ENCODE measurements at regions of chr5 and their contacts with region 1.

Region 1: DNA sequence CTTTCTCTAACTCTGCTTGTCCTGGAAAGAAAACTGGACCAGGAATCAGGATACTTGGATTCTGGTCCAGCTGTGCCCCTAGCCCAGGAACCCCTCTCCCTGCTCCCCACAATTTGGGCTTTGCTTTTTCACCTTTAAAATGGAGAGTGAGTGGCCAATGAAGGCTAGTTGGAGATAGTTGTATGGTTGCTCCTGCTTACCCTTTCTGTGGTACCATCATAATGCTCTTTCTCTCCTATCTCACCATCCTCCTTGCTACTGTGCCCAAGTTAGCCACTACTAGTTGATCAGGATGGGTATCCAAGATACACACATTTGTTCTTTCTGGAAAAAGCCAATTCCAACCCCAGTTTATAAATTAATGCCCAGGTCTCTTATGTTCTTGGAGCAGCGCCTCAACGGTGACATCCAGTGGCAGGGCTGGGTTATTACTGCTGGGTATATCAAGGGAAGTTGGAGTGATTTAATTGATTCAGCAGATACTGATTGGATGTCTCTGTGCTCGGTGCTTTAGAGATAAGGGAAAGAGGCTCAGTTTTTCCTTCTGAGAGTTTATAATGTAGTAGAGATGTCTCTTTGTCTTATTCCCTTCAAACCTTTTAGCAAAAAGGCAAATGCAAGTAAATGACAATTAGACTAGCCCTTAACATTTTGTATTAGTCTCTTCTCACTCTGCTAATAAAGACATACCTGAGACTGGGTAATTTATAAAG is 38.6 kb downstream of the FAXDC2 start:
- DNase-seq: peak; percentile 43
- H3K4me3 Mint-ChIP-seq: no peak overlapping the region
- H3K27ac Mint-ChIP-seq: no peak overlapping the region
- H3K4me1 Mint-ChIP-seq: peaks cover 11% of the 10 kb centered on the region
- H3K27me3 Mint-ChIP-seq: no peaks in the 10 kb centered on the region

Region 2: GRCh38 chr5:154647114-154647760 is 164.6 kb before region 1 on chr5:
- intact Hi-C with region 1: loop called (anchors 1 kb)
- DNase-seq: no peak
- H3K4me3 Mint-ChIP-seq: peak overlapping the region; percentile 71
- H3K27ac Mint-ChIP-seq: no peak overlapping the region
- H3K4me1 Mint-ChIP-seq: peaks cover 15% of the 10 kb centered on the region
- H3K27me3 Mint-ChIP-seq: peaks cover 37% of the 10 kb centered on the region

Region 3: DNA sequence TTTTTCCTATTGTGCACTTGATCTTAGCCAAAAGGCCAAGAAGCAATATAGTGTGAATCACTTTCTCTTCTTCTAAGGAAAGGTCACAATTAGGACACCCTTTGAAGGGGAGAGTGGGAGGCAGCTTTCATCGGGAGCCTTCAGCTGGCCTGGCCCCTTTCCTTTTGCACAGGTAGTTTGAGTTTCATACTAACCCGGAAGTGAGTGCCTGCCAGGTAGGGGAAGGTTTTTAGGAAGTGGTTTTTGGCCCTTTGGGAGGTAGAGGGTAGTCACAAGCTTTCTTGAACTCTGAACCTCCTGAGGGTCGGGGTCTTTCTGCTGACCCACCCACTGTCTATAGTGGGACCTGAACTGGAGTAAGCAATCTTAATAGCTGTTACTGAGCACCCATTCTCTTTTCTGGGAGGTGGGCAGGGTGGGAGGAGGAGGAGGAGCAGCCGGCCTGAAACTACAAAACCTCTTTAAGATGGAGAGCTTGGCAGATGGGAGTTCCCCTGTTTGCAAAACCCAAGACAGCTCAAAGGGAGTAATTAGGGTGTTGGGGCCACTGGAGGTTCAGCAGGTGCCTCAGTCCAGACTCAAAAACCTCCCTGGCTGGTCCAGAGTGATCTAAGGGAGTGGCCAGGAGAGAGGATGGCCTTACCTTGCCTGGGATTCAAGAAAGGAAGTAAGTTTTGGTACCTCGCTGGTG is 50.6 kb before region 1 on chr5:
- intact Hi-C with region 1: loop called (anchors 2 kb)
- DNase-seq: no peak
- H3K4me3 Mint-ChIP-seq: peak overlapping the region; percentile 43
- H3K27ac Mint-ChIP-seq: peak overlapping the region; percentile 77
- H3K4me1 Mint-ChIP-seq: peaks cover 58% of the 10 kb centered on the region
- H3K27me3 Mint-ChIP-seq: no peaks in the 10 kb centered on the region

Region 4: GRCh38 chr5:154823605-154824004 is 11.8 kb after region 1 on chr5:
- intact Hi-C with region 1: no loop called
- DNase-seq: no peak
- H3K4me3 Mint-ChIP-seq: no peak overlapping the region
- H3K27ac Mint-ChIP-seq: no peak overlapping the region
- H3K4me1 Mint-ChIP-seq: peaks cover 12% of the 10 kb centered on the region
- H3K27me3 Mint-ChIP-seq: no peaks in the 10 kb centered on the region